Astrocyte of the cerebellum (primary cell): ENCODE measurements at regions of chr10 and their contacts with region 1.

Region 1: DNA sequence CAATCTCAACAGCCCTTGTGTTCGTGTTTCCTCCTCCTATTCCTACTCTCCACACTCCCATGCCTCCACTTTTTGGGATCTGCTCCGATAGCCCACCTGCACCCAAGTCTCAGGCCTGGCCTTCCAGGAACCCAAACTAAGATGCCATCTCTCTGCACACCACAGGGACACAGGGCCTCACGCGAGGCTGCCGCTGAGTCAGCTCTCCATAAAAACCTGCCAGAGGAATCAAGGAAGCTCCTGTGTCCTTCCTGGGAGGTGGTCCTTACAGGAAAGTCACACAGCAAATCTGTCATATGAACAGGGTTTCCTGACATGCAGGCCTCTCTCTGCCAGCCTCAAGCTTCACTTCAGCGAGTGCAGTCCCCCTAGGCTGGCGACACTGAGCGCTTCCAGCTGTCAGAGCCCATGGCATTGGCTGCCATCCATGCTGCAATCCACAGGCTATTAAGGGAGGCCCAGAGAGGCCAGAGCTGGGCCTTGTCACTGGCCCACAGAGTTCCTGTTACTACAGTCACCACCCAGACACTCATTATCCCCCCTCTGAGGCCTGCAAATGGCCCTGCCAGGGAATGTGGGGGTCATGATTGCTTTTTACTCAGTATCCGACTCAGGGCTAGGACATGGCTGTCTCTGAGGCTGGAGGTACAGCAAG is 151.4 kb downstream of the OAT start:
- DNase-seq: no peak
- H3K4me3 ChIP-seq: no peak overlapping the region
- CTCF ChIP-seq: no peak

Region 2: GRCh38 chr10:124217906-124218804 is 49.2 kb before region 1 on chr10:
- in situ Hi-C with region 1: loop called (anchors 5 kb)
- DNase-seq: no peak
- H3K4me3 ChIP-seq: no peak overlapping the region
- CTCF ChIP-seq: no peak

Region 3: DNA sequence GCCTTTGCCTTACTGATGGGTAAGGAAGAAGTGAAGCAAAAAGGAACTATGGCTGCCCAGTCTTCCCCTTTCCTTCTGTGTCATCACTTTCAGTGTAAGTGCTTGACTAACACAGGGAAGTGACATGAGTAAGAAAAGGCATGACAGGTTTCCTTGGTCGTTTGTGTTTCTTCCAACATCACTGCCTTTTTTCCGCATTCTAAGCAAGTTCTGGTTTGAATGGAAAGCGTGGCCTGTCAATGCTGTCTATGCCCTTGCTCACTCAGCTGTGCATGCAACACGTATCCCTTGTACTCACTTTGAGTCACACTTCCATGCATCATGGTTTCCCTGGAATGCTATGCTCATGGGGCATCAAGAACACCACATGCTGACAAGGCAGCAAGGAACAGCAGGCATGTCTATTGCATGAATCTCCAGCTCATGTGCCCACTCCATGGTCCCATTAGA is 39.6 kb after region 1 on chr10:
- in situ Hi-C with region 1: no loop called
- DNase-seq: no peak
- H3K4me3 ChIP-seq: no peak overlapping the region
- CTCF ChIP-seq: no peak